ENCODE measurements at regions of chr10 and their contacts with region 1.

Region 1: DNA sequence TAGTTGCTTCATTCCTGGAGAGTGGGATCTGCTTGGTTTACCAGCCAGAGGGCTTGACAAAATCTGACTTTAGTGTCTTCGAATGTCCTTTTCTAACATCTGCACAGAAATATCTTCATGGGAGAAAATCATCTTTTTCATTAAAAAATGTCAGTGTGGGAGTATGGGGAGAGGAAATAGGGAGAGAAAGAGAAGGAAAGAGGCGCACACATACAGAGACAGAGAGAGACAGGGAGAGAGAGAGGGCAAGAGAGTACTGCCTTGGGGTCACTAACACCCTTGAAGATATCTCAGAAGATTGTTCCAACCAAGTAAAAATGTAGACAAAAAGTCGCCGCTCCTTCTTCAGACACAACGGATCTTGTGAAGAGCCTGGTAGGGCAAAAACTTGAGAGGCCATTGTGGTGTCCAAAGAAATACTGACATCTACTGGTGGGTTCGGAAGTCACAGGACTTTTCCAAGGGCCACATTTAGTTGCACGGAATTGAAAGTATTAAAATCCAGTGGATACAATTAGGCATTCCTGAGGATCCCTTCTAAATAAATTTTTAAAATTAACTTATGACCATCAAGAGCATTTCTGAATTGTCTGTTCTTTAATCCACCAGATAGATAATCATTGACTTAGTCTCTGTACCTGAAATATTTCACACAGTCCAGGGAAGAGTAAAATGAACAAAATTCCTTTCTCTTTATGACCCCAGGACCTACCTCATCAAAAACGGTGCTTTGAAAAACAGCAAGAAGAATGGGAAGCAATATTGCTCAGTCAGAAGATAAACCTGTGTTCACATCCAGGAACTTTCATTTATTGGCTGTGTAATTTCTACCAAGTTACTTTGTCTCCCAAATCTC is 29.7 kb downstream of the VIM start:
- DNase-seq: peak; percentile 81

Region 2: GRCh38 chr10:15879058-15879457 is 1378.6 kb before region 1 on chr10:
- in situ Hi-C with region 1: loop called (anchors 25 kb)
- DNase-seq: peak; percentile 57

Region 3: GRCh38 chr10:16742165-16742960 is 515.3 kb before region 1 on chr10:
- in situ Hi-C with region 1: no loop called
- DNase-seq: peak; percentile 52

Region 4: DNA sequence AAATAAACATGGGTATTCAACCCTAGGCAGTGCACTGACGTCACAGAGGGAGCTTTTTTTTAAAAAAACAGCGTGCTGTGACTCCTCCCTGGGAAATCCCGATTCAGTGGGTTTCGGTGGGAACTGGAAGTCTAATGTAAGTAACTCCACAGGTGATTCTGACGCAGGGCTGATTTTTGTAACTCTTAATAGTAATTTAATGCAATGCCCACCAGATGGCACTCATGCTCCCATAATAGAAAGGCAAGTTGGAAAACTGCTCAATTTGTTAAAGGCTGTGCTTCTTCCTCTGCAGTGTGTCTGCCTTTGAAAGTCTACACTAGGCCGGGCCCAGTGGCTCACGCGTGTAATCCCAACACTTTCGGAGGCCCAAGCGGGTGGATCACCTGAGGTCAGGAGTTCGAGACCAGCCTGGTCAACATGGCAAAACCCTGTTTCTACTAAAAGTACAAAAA is 429.6 kb before region 1 on chr10:
- in situ Hi-C with region 1: loop called (anchors 25 kb)
- DNase-seq: peak; percentile 82

Region 5: GRCh38 chr10:17725703-17726102 is 468.0 kb after region 1 on chr10:
- in situ Hi-C with region 1: no loop called
- DNase-seq: no peak